Posterior vena cava (tissue), 2 donors: ENCODE measurements at regions of chr11 and their contacts with region 1.

Region 1: GRCh38 chr11:110086892-110087309 is 6.3 kb upstream of the ZC3H12C start:
- DNase-seq: no peak

Region 2: DNA sequence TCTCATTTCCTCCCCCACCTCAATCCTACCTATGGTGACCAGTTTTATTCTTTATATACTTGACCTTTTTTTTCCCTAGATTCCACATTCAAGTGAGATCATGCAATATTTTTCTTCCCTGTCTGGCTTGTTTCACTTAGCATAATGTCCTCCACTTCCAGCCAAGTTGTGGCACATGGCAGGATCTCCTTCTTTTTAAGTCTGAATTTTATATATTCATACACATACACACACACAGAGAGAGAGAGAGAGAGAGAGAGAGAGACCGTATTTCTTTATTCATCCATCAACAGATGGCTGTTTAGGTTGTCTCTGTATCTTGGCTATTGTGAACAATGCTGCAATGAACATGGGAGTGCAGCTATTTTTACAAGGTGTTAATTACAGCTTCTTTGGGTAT is 1160.1 kb after region 1 on chr11:
- intact Hi-C with region 1: loop called in 1 of 2 experiments (anchors 5 kb)
- DNase-seq: no peak